Gastrocnemius medialis (tissue), 4 donors: ENCODE measurements at regions of chr15 and their contacts with region 1.

Region 1: GRCh38 chr15:99068186-99068585 is 36.7 kb upstream of the SYNM start:
- DNase-seq: no peak
- ATAC-seq: no peak
- H3K4me3 ChIP-seq: no peak overlapping the region
- H3K27ac ChIP-seq: no peak overlapping the region
- H3K4me1 ChIP-seq: no peaks in the 10 kb centered on the region
- H3K27me3 ChIP-seq: no peaks in the 10 kb centered on the region
- CTCF ChIP-seq: no peak
- POLR2A ChIP-seq: no peak

Region 2: DNA sequence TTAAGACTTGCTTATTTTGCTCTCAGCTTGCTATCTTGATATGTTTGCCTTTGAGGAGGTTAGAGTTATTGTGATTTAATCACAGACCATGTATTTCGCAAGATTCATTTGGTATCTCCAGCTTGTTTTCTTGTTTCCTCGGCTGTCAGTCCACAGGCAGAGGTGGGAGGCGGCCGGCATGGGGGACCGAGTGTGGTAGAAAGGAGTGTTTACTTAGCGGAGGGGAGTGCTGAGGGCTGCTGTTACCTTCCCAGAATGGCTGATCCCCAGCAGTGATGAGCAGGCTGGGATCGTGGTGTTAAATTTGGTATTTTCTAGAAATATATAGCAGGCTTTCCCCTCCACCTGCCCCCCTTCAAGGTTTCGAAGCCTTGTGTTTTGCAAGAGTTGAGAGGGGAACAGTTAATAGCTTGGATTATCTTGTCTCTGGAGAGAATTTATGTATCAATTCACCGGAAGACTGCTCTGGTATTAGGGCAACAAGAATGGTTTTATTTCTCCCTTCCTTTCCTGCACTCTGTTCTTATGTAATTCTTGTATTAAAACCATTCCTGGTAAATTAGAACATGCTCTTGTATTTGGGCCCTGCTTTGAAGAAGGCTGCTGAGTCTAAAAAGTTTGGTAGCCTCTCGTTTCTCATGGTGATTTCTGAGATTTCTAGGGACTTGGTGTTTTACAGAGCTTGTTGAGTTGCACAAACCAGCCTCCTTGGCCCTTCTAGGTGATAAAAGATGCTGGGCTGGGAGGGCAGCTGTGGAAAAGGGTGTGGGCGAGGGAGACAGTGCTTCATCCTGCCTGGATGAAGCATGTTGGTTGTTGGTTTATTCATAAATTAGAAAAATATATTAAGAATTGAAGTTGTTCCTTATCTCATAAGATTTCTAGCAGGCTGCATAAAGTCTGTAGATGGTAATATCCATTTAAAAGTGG is 268.5 kb before region 1 on chr15:
- in situ Hi-C with region 1: no loop called
- intact Hi-C with region 1: no loop called
- DNase-seq: no peak
- ATAC-seq: no peak
- H3K4me3 ChIP-seq: peak overlapping the region in 3 of 4 donors; percentile 17 to 31 (median 25)
- H3K27ac ChIP-seq: peak overlapping the region in 2 of 4 donors; percentile 11 to 27
- H3K4me1 ChIP-seq: peaks cover 27 to 37% of the 10 kb centered on the region in 2 donors
- H3K27me3 ChIP-seq: no peaks in the 10 kb centered on the region
- CTCF ChIP-seq: no peak
- POLR2A ChIP-seq: no peak

Region 3: DNA sequence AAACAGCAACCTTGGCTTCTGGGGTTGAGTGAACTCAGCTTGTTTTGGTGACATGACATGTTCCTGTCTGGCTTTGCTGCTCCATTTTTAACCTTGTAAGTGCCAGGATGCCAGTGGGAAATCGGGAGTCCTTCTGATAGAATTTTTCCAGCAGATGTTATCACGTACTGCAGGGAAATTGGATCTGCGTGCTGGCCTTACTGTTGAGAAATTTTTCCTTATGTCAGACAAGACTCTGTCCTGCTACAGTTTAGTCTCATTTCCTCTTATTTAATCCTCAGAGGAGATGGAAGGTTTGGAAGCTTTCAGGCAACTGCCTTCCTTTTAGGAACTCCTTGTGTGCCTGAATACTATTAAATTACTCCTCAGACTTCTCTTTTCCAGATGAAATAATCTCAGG is 141.2 kb before region 1 on chr15:
- in situ Hi-C with region 1: loop called in 1 of 4 experiments (anchors 10 kb)
- intact Hi-C with region 1: no loop called
- DNase-seq: no peak
- ATAC-seq: peak in 1 of 2 donors; percentile 34
- H3K4me3 ChIP-seq: no peak overlapping the region
- H3K27ac ChIP-seq: peak overlapping the region in 1 of 4 donors; percentile 15
- H3K4me1 ChIP-seq: peaks cover 21 to 25% of the 10 kb centered on the region in 2 donors
- H3K27me3 ChIP-seq: no peaks in the 10 kb centered on the region
- CTCF ChIP-seq: no peak
- POLR2A ChIP-seq: no peak

Region 4: GRCh38 chr15:99143655-99144610 is 75.7 kb after region 1 on chr15:
- in situ Hi-C with region 1: no loop called
- intact Hi-C with region 1: no loop called
- DNase-seq: peak; percentile 85 to 95
- ATAC-seq: peak; percentile 98
- H3K4me3 ChIP-seq: no peak overlapping the region
- H3K27ac ChIP-seq: peak overlapping the region; percentile 85 to 97 (median 90)
- H3K4me1 ChIP-seq: peaks cover 42 to 48% of the 10 kb centered on the region in 2 donors
- H3K27me3 ChIP-seq: no peaks in the 10 kb centered on the region
- CTCF ChIP-seq: no peak
- POLR2A ChIP-seq: no peak

Region 5: GRCh38 chr15:99279290-99279689 is 211.1 kb after region 1 on chr15:
- in situ Hi-C with region 1: no loop called
- intact Hi-C with region 1: no loop called
- DNase-seq: no peak
- ATAC-seq: no peak
- H3K4me3 ChIP-seq: no peak overlapping the region
- H3K27ac ChIP-seq: no peak overlapping the region
- H3K4me1 ChIP-seq: peaks cover 6 to 7% of the 10 kb centered on the region in 2 donors
- H3K27me3 ChIP-seq: no peaks in the 10 kb centered on the region
- CTCF ChIP-seq: no peak
- POLR2A ChIP-seq: no peak

Region 6: DNA sequence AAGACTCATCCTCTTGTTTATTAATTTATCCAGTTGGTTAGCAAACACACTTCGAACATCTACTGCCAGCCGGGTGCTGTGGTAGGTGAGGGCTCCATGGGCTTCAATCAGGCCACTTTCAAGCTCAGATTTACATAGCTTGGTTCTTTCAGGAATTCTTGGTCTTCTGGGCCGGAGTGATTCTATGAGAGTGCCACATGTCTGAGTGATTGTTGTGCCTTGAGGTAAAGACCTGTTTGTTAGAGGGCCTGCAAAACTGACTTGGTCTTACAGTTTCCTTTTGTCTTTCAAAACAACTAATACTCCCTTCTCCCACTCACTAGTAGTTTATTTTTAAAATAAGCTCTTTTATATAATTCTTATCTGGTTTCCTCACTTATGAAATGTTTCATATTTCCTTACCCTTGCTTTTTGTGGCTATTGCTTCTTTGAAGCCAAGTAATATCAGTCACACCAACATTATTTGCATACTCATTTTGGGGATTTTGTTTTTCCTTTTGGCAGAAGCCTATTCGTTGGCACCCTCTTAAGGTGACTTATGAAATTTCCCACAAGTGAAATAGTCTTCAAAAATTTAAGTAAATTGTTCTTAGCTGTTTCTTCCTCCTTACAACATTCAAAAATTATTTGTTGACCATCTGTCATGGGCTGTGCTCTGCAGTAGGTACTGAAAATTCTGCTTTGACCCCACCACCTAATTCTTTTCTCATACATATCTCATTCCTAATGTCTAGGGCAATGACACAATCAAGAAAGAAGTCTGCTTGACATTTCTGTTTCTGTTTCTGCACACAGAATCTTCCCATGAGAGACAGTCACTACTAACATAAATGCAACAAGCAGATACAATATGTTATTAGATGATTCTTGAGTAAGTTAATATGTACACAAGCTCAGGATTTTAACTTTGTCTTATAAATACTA is 303.3 kb after region 1 on chr15:
- in situ Hi-C with region 1: no loop called
- intact Hi-C with region 1: no loop called
- DNase-seq: no peak
- ATAC-seq: no peak
- H3K4me3 ChIP-seq: no peak overlapping the region
- H3K27ac ChIP-seq: no peak overlapping the region
- H3K4me1 ChIP-seq: no peaks in the 10 kb centered on the region
- H3K27me3 ChIP-seq: no peaks in the 10 kb centered on the region
- CTCF ChIP-seq: no peak
- POLR2A ChIP-seq: no peak